Activated CD4-positive, alpha-beta T cell treated with anti-CD3 and anti-CD28 coated beads for 36 hours (primary cell): ENCODE measurements at regions of chr22 and their contacts with region 1.

Region 1: GRCh38 chr22:42614312-42615091 is at the start of gene POLDIP3:
- DNase-seq: peak; percentile 100
- ATAC-seq: peak; percentile 75
- H3K4me3 Mint-ChIP-seq: peak within 1 kb of the TSS; percentile 97
- H3K27ac Mint-ChIP-seq: peak within 1 kb of the TSS; percentile 99
- H3K4me1 Mint-ChIP-seq: peaks cover 54% of the 10 kb centered on the region
- H3K27me3 Mint-ChIP-seq: no peaks in the 10 kb centered on the region
- total RNA-seq, gene POLDIP3: 77.6 to 88.6 TPM

Region 2: DNA sequence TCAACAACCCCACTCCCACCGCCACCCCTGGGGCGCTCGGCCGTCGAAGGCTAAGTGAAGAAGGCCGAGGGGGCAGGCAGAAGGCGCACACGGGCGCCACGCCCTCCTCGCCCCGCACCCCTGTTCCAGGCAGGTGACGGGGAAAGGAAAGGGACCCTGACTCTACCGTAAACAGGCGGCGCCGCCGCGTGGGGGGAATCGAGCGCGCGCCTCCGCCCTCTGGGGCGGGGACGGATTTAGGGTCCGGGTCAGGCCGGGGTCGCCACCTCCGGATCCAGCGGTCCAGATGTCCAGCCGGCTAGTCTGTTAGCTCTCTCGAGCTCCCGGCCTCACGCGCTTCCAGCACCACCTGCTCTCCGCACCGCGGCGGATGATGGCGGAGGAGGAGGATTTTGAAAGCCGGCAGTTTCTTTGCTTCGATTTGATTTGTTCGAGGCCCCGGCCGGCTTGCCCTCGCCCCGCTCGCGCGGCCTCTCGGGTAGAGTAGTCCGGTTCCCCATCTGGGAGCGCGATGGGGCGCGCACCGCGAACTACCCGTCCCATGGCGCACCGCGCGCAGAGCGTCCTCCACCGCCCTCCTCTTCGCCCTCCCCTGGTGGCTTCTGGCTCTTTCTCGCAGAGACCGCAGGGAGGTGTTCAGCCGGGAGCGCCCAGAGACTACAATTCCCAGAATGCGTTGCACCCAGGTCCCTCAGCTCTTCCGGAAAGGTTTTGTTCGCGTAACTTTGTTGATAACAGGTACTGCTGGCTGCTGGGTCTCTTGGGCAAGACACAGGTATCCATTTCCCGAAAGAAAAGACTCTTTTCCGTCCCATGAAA is 1328.5 kb before region 1 on chr22 and contains the start of gene RANGAP1:
- CTCF ChIA-PET with region 1: no interaction called
- POLR2A ChIA-PET with region 1: no interaction called
- intact Hi-C with region 1: loop called in 1 of 2 experiments (anchors 10 kb)
- DNase-seq: peak; percentile 99
- ATAC-seq: peak; percentile 94
- H3K4me3 Mint-ChIP-seq: peak within 1 kb of the TSS; percentile 88
- H3K27ac Mint-ChIP-seq: peak within 1 kb of the TSS; percentile 97
- H3K4me1 Mint-ChIP-seq: peaks cover 33% of the 10 kb centered on the region
- H3K27me3 Mint-ChIP-seq: no peaks in the 10 kb centered on the region
- total RNA-seq, gene RANGAP1: 140 to 157 TPM

Region 3: DNA sequence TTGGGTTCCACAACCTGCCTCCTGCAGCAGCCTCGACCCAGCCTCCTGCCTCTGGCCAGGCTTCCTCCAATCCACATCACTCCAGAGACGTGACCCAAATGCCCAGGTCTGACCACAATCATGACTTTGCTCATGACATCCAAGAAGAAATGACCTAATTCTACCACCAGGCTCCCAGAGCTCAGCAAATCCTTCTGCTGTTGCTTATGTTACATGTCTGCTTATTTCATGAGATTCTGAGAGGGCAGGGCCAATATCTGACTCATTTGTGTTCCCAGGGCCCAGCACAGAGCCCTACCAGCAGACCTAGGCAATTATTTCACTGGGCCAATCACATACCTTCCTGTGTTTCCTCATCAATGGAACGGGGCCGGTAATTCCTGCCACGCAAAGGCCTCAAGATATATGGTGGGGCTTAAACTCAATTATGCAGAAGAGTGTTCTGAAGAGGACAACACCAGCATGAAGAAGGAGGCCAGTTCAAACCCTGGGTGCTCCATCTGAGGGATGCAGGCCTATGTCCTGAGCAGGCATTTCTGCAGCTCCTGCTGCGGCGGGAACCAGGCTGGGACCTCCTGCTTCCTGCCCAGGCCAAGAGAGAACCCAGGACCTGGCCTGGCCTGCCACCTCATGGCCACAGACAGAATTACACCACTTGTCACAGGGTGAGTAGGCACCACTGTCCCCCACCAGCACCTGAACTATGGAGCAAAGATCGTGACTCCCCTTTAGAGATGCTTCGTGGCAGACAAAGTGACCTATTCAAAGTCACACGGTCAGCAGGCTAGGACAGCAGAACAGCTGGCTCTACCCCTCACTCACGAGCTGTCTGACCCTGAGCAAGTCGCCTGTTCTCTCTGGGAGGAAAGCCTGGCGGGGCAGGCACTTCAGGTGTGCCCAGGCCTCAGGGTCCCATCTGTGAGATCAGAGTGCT is 673.4 kb before region 1 on chr22:
- CTCF ChIA-PET with region 1: no interaction called
- POLR2A ChIA-PET with region 1: no interaction called
- intact Hi-C with region 1: loop called in 1 of 2 experiments (anchors 1 kb)
- DNase-seq: peak; percentile 91
- ATAC-seq: peak; percentile 63
- H3K4me3 Mint-ChIP-seq: peak overlapping the region; percentile 78
- H3K27ac Mint-ChIP-seq: peak overlapping the region; percentile 99
- H3K4me1 Mint-ChIP-seq: peaks cover 70% of the 10 kb centered on the region
- H3K27me3 Mint-ChIP-seq: no peaks in the 10 kb centered on the region

Region 4: GRCh38 chr22:42090596-42091454 is 523.7 kb before region 1 on chr22 and contains the start of gene NDUFA6:
- CTCF ChIA-PET with region 1: no interaction called
- POLR2A ChIA-PET with region 1: interaction called, 5 read pairs
- intact Hi-C with region 1: loop called in 1 of 2 experiments (anchors 1 kb)
- DNase-seq: peak; percentile 99
- ATAC-seq: peak; percentile 97
- H3K4me3 Mint-ChIP-seq: peak within 1 kb of the TSS; percentile 96
- H3K27ac Mint-ChIP-seq: peak within 1 kb of the TSS; percentile 99
- H3K4me1 Mint-ChIP-seq: peaks cover 30% of the 10 kb centered on the region
- H3K27me3 Mint-ChIP-seq: no peaks in the 10 kb centered on the region
- total RNA-seq, gene NDUFA6: 123 to 144 TPM

Region 5: GRCh38 chr22:42520663-42521546 is 93.6 kb before region 1 on chr22:
- CTCF ChIA-PET with region 1: no interaction called
- POLR2A ChIA-PET with region 1: no interaction called
- intact Hi-C with region 1: loop called in 1 of 2 experiments (anchors 2 kb)
- DNase-seq: no peak
- ATAC-seq: no peak
- H3K4me3 Mint-ChIP-seq: no peak overlapping the region
- H3K27ac Mint-ChIP-seq: no peak overlapping the region
- H3K4me1 Mint-ChIP-seq: peaks cover 9% of the 10 kb centered on the region
- H3K27me3 Mint-ChIP-seq: no peaks in the 10 kb centered on the region

Region 6: DNA sequence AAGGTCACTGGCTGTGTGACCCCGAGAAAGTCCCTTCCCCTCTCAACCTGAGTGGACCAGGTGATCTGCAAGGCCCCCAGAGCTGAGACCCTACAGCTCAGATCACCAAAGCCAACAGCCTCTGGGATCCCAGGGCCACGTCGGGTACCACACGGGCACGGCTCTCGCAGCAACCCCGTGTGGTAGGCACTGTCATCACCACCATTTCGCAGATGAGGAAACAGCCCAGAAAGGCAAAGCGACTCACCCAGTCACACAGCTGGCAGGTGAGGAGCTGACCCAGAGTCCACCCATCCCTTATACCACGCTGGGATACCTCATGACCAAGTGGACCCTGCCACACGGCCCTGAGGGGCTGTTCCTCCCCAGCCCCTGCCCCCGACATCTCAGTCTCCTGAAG is 23.1 kb after region 1 on chr22:
- CTCF ChIA-PET with region 1: no interaction called
- POLR2A ChIA-PET with region 1: interaction called, 23 read pairs
- intact Hi-C with region 1: no loop called
- DNase-seq: no peak
- ATAC-seq: no peak
- H3K4me3 Mint-ChIP-seq: no peak overlapping the region
- H3K27ac Mint-ChIP-seq: no peak overlapping the region
- H3K4me1 Mint-ChIP-seq: peaks cover 3% of the 10 kb centered on the region
- H3K27me3 Mint-ChIP-seq: no peaks in the 10 kb centered on the region

Region 7: DNA sequence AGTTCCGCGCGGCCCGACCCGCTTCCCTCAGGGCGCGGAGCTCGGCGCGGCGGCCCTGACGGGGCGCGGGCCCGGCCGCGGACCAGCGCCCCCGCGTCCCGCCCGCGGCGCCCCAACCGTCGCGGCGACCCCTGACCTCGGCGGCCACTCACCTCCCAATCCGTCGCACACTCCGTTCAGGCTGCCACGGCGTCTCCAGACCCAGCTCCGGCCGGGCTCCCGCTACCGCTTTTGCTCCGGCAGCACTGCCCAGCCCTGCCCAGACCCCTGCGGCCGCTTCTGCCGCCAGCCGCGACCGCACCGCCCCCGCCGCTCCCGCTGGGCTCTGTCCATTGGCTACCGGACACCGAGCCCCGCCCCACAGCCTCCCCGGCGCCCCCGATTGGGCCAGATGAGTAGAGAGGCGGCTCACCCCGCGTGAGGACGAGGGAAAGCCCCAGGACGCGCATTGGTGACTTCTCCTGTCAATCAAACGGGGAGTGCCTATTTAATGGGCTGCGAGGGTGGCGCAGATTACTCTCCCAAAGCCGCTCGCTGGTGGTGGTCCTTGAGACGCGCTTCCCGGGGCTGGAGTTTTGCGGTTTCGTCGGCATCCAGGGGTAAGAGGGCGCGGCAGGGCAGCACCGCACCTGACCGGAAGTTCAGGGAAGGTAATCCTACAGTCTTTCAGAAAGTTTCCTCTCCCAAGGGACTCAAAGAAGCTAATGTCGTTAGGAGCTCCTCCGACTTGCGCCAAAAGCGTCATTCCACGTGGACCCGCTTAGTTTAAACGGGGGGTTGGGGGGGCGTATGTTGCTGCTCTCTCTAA is 400.6 kb after region 1 on chr22 and contains the start of gene PACSIN2:
- CTCF ChIA-PET with region 1: no interaction called
- POLR2A ChIA-PET with region 1: interaction called, 3 read pairs
- intact Hi-C with region 1: loop called in 1 of 2 experiments (anchors 1 kb)
- DNase-seq: peak; percentile 99
- ATAC-seq: peak; percentile 100
- H3K4me3 Mint-ChIP-seq: peak within 1 kb of the TSS; percentile 90
- H3K27ac Mint-ChIP-seq: peak within 1 kb of the TSS; percentile 82
- H3K4me1 Mint-ChIP-seq: peaks cover 21% of the 10 kb centered on the region
- H3K27me3 Mint-ChIP-seq: no peaks in the 10 kb centered on the region
- total RNA-seq, gene PACSIN2: 27.9 to 28.1 TPM